ENCODE measurements at regions of chr1 and their contacts with region 1.

Region 1: GRCh38 chr1:209747580-209748262 is 8.1 kb upstream of the TRAF3IP3 start:
- DNase-seq: peak; percentile 88
- H3K4me3 Mint-ChIP-seq: peak overlapping the region; percentile 66
- H3K27ac Mint-ChIP-seq: peak overlapping the region; percentile 88
- H3K4me1 Mint-ChIP-seq: peaks cover 72% of the 10 kb centered on the region
- H3K27me3 Mint-ChIP-seq: no peaks in the 10 kb centered on the region

Region 2: DNA sequence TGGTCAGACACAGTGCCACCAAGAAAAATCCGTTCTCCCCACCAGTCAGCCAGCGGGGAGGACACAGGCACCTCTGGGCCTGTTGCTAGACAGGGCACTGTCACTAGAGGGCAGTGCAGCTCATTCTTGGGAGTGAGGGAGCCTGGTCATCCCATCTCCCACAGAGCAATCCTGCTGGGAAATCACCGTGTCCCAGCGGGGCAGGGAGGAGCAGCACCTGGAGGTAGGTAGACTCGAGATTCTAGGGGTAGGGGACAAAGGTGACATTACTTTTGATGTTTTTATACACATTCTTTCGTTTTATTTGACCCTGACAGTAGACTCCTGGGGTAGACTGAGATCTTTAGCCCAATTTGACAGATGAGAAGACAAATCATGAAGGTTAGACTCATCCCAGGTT is 170.9 kb before region 1 on chr1:
- CTCF ChIA-PET with region 1: interaction called, 40 read pairs
- DNase-seq: peak; percentile 80
- H3K4me3 Mint-ChIP-seq: no peak overlapping the region
- H3K27ac Mint-ChIP-seq: no peak overlapping the region
- H3K4me1 Mint-ChIP-seq: no peaks in the 10 kb centered on the region
- H3K27me3 Mint-ChIP-seq: peaks cover 39% of the 10 kb centered on the region

Region 3: GRCh38 chr1:209601809-209602657 is 145.7 kb before region 1 on chr1:
- CTCF ChIA-PET with region 1: interaction called, 17 read pairs
- DNase-seq: peak; percentile 58
- H3K4me3 Mint-ChIP-seq: no peak overlapping the region
- H3K27ac Mint-ChIP-seq: no peak overlapping the region
- H3K4me1 Mint-ChIP-seq: peaks cover 4% of the 10 kb centered on the region
- H3K27me3 Mint-ChIP-seq: peaks cover 13% of the 10 kb centered on the region

Region 4: DNA sequence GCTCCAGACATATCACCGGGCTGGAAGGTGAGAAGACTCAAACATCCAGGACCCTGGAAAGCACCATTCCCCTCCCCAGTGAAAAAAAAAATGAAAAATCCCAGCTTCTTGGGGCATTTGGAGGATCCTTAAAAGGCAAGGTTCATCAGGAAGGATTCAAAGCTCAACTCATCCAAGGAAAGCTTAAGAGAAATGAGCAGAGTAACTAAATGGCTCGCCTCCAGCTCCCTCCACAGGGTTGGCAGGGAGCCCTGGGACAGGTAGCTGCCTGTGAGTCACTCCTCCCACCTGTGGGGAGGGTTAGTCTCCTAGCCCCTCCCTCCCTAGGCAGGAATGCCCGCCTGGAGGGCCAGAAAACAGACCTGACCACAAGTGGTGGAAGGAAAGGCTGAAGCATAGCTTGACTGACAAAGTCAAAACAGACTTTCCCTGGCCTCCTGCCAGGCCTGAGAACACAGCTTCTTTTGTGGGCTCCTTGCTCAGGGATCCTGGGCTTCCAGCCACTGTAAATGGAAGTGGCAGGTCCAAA is 94.8 kb before region 1 on chr1:
- CTCF ChIA-PET with region 1: interaction called, 11 read pairs
- DNase-seq: no peak
- H3K4me3 Mint-ChIP-seq: no peak overlapping the region
- H3K27ac Mint-ChIP-seq: no peak overlapping the region
- H3K4me1 Mint-ChIP-seq: peaks cover 34% of the 10 kb centered on the region
- H3K27me3 Mint-ChIP-seq: peaks cover 15% of the 10 kb centered on the region

Region 5: GRCh38 chr1:209692745-209693504 is 54.8 kb before region 1 on chr1:
- CTCF ChIA-PET with region 1: interaction called, 18 read pairs
- DNase-seq: peak; percentile 81
- H3K4me3 Mint-ChIP-seq: no peak overlapping the region
- H3K27ac Mint-ChIP-seq: no peak overlapping the region
- H3K4me1 Mint-ChIP-seq: peaks cover 60% of the 10 kb centered on the region
- H3K27me3 Mint-ChIP-seq: peaks cover 10% of the 10 kb centered on the region

Region 6: DNA sequence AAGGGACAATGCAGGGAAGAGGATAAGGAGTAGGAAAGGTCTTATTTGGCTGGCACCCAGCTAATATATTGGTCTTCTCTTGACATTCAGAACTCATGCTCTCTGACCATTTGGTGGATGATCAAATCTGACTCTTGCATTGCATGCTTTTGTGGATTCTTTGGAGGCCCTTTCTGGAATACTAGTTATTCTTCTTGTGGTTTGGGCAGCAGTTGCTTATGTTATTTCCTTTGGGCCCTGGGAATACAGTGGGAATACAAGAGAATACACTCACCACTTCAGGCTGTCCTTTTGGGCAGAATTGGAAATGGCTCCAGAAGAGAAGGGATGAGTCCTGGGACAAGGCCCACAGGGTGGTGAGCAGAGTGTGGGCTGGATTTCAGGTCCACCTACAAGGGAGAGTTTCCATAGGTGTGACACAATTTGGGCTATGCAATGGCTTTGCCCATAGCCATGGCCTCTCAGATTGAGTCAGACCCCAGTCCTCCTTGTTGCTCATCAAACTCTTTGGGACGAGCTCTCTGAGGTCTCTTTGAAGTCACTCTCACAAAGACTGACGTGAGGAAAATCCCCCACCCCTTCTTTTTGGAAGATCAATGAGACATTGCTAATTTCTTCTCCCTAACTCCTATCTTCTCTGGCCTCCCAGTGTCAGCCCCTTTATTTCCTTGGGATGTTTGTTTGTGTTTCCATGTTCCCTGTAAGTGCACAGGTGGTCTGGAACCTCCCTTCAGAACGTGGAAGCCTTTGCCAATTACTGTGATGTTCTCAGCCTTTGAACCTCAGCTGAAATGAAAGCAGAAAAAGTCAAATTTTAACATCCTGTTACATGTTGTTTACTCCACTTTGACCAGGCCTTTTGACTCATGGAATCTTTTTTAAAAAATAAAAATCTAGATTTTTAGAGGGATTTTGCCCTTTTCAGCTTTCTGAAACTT is 23.7 kb before region 1 on chr1:
- CTCF ChIA-PET with region 1: interaction called, 20 read pairs
- DNase-seq: peak; percentile 48
- H3K4me3 Mint-ChIP-seq: no peak overlapping the region
- H3K27ac Mint-ChIP-seq: peak overlapping the region; percentile 90
- H3K4me1 Mint-ChIP-seq: peaks cover 32% of the 10 kb centered on the region
- H3K27me3 Mint-ChIP-seq: no peaks in the 10 kb centered on the region

Measured in activated naive CD4-positive, alpha-beta T cell treated with anti-CD3 and anti-CD28 coated beads, Interleukin-2, amount 10 ng/mL, durations not matched to agents 7 days and 5 days (primary cell).